Aorta (tissue), 5 donors: ENCODE measurements at regions of chrX and their contacts with region 1.

Region 1: DNA sequence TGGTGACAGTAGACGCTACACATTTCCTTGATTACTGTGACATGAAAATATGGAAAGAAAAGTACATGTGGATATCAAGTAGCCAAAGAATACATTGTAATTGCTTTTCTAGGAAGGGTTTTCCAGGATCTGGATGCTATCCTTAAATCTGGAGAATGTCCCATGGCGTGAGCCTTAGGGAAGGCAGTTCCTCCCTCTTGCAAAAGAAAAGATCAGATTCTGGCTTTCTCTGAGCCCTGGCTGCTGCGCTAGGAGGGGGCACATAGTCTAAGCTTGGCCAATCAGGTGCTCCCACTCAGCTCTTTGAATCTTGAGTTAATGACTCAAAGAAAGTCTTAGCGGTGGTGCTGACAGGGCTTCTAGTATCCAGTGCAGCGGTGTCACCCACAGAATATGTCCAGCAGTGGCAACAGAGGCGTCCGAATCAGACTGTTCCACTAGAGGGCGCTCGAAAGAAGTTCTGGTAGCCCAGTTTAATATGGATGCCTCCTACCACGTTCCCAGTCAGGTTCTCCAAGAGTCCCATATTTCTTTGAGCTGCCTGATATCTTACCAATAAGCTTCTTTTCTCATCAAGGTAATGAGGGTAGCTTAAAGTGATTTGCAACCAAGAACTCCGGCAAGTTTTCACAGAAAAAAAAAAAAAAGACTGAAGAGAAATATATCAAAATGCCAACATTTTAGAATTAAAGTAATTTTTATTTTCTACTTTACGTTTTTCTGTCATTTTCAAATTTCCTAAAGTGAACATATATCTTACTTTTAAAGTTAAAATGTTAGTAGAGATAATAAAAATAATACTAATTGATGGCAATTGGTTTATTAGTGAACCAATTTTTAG is 213.4 kb upstream of the S100G start:
- DNase-seq: peak; percentile 80 to 86
- ATAC-seq: peak; percentile 86
- H3K4me3 ChIP-seq: no peak overlapping the region
- H3K27ac ChIP-seq: no peak overlapping the region
- H3K4me1 ChIP-seq: no peaks in the 10 kb centered on the region
- H3K27me3 ChIP-seq: no peaks in the 10 kb centered on the region

Region 2: GRCh38 chrX:16666541-16666940 is 230.0 kb after region 1 on chrX:
- intact Hi-C with region 1: loop called in 1 of 2 experiments (anchors 10 kb)
- DNase-seq: no peak
- ATAC-seq: no peak
- H3K4me3 ChIP-seq: no peak overlapping the region
- H3K27ac ChIP-seq: no peak overlapping the region
- H3K4me1 ChIP-seq: no peaks in the 10 kb centered on the region
- H3K27me3 ChIP-seq: no peaks in the 10 kb centered on the region

Region 3: GRCh38 chrX:16687514-16687913 is 250.9 kb after region 1 on chrX:
- intact Hi-C with region 1: loop called in 1 of 2 experiments (anchors 10 kb)
- DNase-seq: no peak
- ATAC-seq: no peak
- H3K4me3 ChIP-seq: no peak overlapping the region
- H3K27ac ChIP-seq: no peak overlapping the region
- H3K4me1 ChIP-seq: no peaks in the 10 kb centered on the region
- H3K27me3 ChIP-seq: no peaks in the 10 kb centered on the region